Breast epithelium (tissue), 4 donors: ENCODE measurements at regions of chr2 and their contacts with region 1.

Region 1: DNA sequence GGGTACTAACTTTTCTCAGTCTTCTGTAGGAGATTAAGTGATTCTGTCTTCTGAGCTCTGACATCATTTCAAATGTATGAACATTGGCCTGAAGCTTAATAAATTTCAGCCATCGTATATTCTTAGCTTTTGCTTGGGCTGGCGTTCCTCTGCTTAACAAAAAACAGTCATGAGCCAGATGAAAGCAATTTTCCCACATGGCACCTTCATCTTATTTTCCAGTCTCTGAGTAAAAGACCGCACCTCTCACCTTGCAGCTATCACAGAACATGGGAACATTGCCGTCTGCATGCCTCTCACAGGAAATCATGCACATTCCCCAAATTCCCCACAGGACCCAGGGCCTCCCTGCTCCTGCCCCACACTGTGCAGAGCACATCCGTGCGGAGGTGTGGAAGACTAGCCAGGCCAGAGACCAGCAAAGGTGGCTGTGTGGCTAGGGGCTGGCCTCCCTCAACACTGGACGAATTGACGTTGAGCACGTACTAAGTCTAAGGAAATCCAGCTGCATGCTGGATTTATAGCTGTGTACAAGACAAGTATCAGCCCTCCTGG is 531.8 kb upstream of the ID2 start:
- DNase-seq: no peak
- H3K4me3 ChIP-seq: no peak overlapping the region
- H3K27ac ChIP-seq: no peak overlapping the region
- H3K4me1 ChIP-seq: no peaks in the 10 kb centered on the region
- H3K27me3 ChIP-seq: no peaks in the 10 kb centered on the region
- CTCF ChIP-seq: no peak
- POLR2A ChIP-seq: no peak

Region 2: GRCh38 chr2:8080063-8080462 is 70.0 kb before region 1 on chr2:
- intact Hi-C with region 1: loop called (anchors 2 kb)
- DNase-seq: no peak
- H3K4me3 ChIP-seq: no peak overlapping the region
- H3K27ac ChIP-seq: no peak overlapping the region
- H3K4me1 ChIP-seq: no peaks in the 10 kb centered on the region
- H3K27me3 ChIP-seq: no peaks in the 10 kb centered on the region
- CTCF ChIP-seq: no peak
- POLR2A ChIP-seq: no peak